Posterior vena cava (tissue), 2 donors: ENCODE measurements at regions of chr5 and their contacts with region 1.

Region 1: GRCh38 chr5:45532826-45533624 is 163.2 kb downstream of the HCN1 start:
- DNase-seq: no peak

Region 2: DNA sequence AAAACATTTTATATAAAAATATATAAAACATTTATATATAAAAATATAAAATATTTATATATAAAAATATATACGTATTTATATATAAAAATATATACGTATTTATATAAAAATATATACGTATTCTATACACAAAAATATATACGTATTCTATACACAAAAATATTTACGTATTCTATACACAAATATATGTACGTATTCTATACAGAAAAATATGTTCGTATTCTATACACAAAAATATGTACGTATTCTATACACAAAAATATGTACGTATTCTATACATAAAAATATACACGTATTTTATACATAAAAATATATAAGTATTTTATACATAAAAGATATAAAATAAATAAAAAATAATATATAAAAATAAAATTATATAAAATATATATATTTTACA is 160.4 kb before region 1 on chr5:
- intact Hi-C with region 1: loop called in 1 of 2 experiments (anchors 5 kb)
- DNase-seq: no peak

Region 3: DNA sequence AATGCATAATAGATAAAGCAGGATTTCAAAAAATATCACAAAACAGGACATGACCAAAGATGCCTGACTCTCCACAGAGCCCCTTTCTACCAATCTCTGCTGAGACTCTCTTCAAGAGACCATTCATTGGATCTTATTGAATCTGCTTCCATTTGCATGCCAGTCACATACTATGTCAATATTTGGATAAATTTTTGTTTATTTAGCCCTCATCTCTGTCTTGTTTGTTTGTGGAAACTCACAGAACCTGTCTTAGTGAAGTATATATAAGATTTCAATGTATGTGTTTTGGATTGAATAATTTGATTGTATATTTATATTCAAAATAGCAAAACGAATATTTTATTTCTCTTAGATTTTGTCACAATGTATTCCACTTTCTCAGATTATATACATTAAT is 336.6 kb after region 1 on chr5:
- intact Hi-C with region 1: no loop called
- DNase-seq: no peak